A673 (cell line): ENCODE measurements at regions of chr17 and their contacts with region 1.

Region 1: GRCh38 chr17:3738562-3739295 is 15.0 kb downstream of the HASPIN start:
- DNase-seq: no peak
- H3K4me3 ChIP-seq: no peak overlapping the region
- H3K27ac ChIP-seq: no peak overlapping the region
- H3K4me1 ChIP-seq: no peaks in the 10 kb centered on the region
- H3K27me3 ChIP-seq: no peaks in the 10 kb centered on the region
- CTCF ChIP-seq: no peak

Region 2: GRCh38 chr17:3755335-3756030 is 16.8 kb after region 1 on chr17:
- CTCF ChIA-PET with region 1: no interaction called
- POLR2A ChIA-PET with region 1: no interaction called
- intact Hi-C with region 1: no loop called
- DNase-seq: no peak
- H3K4me3 ChIP-seq: no peak overlapping the region
- H3K27ac ChIP-seq: no peak overlapping the region
- H3K4me1 ChIP-seq: no peaks in the 10 kb centered on the region
- H3K27me3 ChIP-seq: no peaks in the 10 kb centered on the region
- CTCF ChIP-seq: no peak

Region 3: GRCh38 chr17:3802461-3803307 is 64.0 kb after region 1 on chr17:
- CTCF ChIA-PET with region 1: no interaction called
- POLR2A ChIA-PET with region 1: no interaction called
- intact Hi-C with region 1: loop called (anchors 5 kb)
- DNase-seq: no peak
- H3K4me3 ChIP-seq: no peak overlapping the region
- H3K27ac ChIP-seq: no peak overlapping the region
- H3K4me1 ChIP-seq: no peaks in the 10 kb centered on the region
- H3K27me3 ChIP-seq: no peaks in the 10 kb centered on the region
- CTCF ChIP-seq: no peak

Region 4: GRCh38 chr17:3827124-3827773 is 88.5 kb after region 1 on chr17:
- CTCF ChIA-PET with region 1: interaction called, 17 read pairs
- POLR2A ChIA-PET with region 1: no interaction called
- intact Hi-C with region 1: loop called (anchors 2 kb)
- DNase-seq: peak; percentile 71
- H3K4me3 ChIP-seq: no peak overlapping the region
- H3K27ac ChIP-seq: no peak overlapping the region
- H3K4me1 ChIP-seq: no peaks in the 10 kb centered on the region
- H3K27me3 ChIP-seq: no peaks in the 10 kb centered on the region
- CTCF ChIP-seq: peak; percentile 82

Region 5: GRCh38 chr17:3845621-3846441 is 107.1 kb after region 1 on chr17 and contains the start of gene NCBP3:
- CTCF ChIA-PET with region 1: interaction called, 16 read pairs
- POLR2A ChIA-PET with region 1: no interaction called
- intact Hi-C with region 1: no loop called
- DNase-seq: peak; percentile 95
- H3K4me3 ChIP-seq: peak within 1 kb of the TSS; percentile 83
- H3K27ac ChIP-seq: peak within 1 kb of the TSS; percentile 95
- H3K4me1 ChIP-seq: no peaks in the 10 kb centered on the region
- H3K27me3 ChIP-seq: no peaks in the 10 kb centered on the region
- CTCF ChIP-seq: peak; percentile 95
- total RNA-seq, gene NCBP3: 59.9 and 68.0 TPM in 2 replicates

Region 6: GRCh38 chr17:3913531-3914311 is 175.0 kb after region 1 on chr17:
- CTCF ChIA-PET with region 1: no interaction called
- POLR2A ChIA-PET with region 1: no interaction called
- intact Hi-C with region 1: loop called (anchors 10 kb)
- DNase-seq: peak; percentile 74
- H3K4me3 ChIP-seq: no peak overlapping the region
- H3K27ac ChIP-seq: no peak overlapping the region
- H3K4me1 ChIP-seq: peaks cover 9% of the 10 kb centered on the region
- H3K27me3 ChIP-seq: no peaks in the 10 kb centered on the region
- CTCF ChIP-seq: peak; percentile 97

Region 7: GRCh38 chr17:4004517-4005295 is 266.0 kb after region 1 on chr17:
- CTCF ChIA-PET with region 1: interaction called, 3 read pairs
- POLR2A ChIA-PET with region 1: no interaction called
- intact Hi-C with region 1: loop called (anchors 5 kb)
- DNase-seq: peak; percentile 68
- H3K4me3 ChIP-seq: no peak overlapping the region
- H3K27ac ChIP-seq: no peak overlapping the region
- H3K4me1 ChIP-seq: no peaks in the 10 kb centered on the region
- H3K27me3 ChIP-seq: no peaks in the 10 kb centered on the region
- CTCF ChIP-seq: peak; percentile 93